Panc1 (cell line): ENCODE measurements at regions of chr6 and their contacts with region 1.

Region 1: GRCh38 chr6:85642774-85643536 is at the start of gene SYNCRIP:
- DNase-seq: peak; percentile 81
- ATAC-seq: peak; percentile 91
- H3K4me3 ChIP-seq: peak within 1 kb of the TSS; percentile 79 to 91
- H3K27ac ChIP-seq: peak within 1 kb of the TSS; percentile 99
- H3K4me1 ChIP-seq: peaks cover 21% of the 10 kb centered on the region; the same call in 1 of the 2 replicates
- H3K27me3 ChIP-seq: no peaks in the 10 kb centered on the region
- CTCF ChIP-seq: no peak
- total RNA-seq, gene SYNCRIP: 141 TPM

Region 2: DNA sequence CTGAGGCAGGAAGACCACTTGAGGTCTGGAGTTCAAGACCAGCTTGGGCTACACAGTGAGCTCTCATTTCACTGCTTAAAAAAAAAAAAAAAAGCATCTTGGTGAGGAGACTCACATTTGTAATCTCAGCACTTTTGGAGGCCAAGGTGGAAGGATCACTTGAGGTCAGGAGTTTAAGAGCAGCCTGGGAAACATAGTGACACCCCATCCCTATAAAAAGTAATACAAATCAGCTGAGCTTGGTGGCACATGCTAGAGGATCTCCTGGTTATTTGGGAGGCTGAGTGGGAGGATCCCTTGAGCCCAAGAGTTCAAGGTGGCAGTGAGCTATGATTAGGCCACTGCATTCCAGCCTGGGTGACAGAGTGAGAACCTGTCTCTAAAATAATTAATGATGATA is 29.1 kb after region 1 on chr6:
- CTCF ChIA-PET with region 1: no interaction called
- POLR2A ChIA-PET with region 1: interaction called, 47 read pairs
- in situ Hi-C with region 1: no loop called
- intact Hi-C with region 1: no loop called
- DNase-seq: no peak
- ATAC-seq: no peak
- H3K4me3 ChIP-seq: no peak overlapping the region
- H3K27ac ChIP-seq: no peak overlapping the region
- H3K4me1 ChIP-seq: peaks cover 22% of the 10 kb centered on the region
- H3K27me3 ChIP-seq: no peaks in the 10 kb centered on the region
- CTCF ChIP-seq: no peak

Region 3: DNA sequence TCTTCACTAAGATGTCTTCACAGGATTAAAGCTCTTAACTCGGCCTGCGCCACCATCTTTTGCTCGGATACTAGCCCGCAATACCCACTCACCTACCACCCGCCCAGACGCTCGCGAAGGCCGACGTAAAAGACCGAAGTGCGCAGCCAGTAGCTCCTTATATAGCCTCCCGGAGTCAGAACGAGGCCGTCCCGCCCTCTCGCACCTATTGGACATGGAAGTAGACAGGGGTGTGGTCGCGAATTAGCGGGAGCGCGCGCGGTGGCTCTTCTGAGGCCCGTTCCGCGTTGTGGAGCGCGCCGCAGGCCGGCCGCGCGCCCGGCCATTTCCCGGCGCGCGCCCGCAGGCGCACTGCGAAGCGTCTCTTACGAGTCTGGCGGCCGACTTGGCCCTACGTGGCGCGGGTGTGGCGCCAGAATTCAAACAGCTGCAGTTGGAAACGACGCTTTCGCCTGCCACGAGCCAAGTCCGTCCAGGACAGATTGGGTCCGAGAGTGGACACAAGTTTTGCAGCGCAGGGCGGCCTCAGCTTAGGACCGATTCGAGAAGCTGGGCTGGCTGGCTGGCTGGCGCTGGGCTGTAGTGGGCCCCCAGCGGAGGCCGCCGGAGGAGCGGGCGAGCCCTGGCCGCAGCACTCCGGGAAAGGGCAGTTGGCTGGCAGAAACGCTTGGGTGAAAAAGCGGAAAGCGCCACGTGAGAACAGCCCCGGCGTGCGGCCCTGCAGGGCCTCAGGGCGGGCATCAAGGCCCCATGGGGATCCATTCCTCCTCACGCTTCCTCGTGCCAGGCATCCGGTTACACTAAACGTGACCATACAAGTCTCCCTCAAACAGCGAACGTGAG is 35.9 kb after region 1 on chr6:
- CTCF ChIA-PET with region 1: interaction called, 4 read pairs
- POLR2A ChIA-PET with region 1: interaction called, 47 read pairs
- in situ Hi-C with region 1: no loop called
- intact Hi-C with region 1: loop called (anchors 1 kb)
- DNase-seq: peak; percentile 94
- ATAC-seq: peak; percentile 93
- H3K4me3 ChIP-seq: peak overlapping the region; percentile 86 to 96
- H3K27ac ChIP-seq: peak overlapping the region; percentile 97
- H3K4me1 ChIP-seq: peaks cover 26% of the 10 kb centered on the region
- H3K27me3 ChIP-seq: no peaks in the 10 kb centered on the region
- CTCF ChIP-seq: no peak